ENCODE measurements at regions of chr1 and their contacts with region 1.

Region 1: GRCh38 chr1:101309334-101310311 is 72.8 kb downstream of the S1PR1 start:
- DNase-seq: no peak
- H3K4me3 ChIP-seq: peak overlapping the region in 1 of 3 experiments; percentile 7
- H3K27ac ChIP-seq: no peak overlapping the region
- H3K4me1 ChIP-seq: peaks cover 6% of the 10 kb centered on the region
- H3K27me3 ChIP-seq: peaks cover 4% of the 10 kb centered on the region
- CTCF ChIP-seq: peak; percentile 90 to 92

Region 2: GRCh38 chr1:101325144-101325543 is 15.5 kb after region 1 on chr1:
- CTCF ChIA-PET with region 1: no interaction called
- dilution Hi-C with region 1: no loop called
- in situ Hi-C with region 1: no loop called
- intact Hi-C with region 1: no loop called
- DNase-seq: no peak
- H3K4me3 ChIP-seq: no peak overlapping the region
- H3K27ac ChIP-seq: no peak overlapping the region
- H3K4me1 ChIP-seq: no peaks in the 10 kb centered on the region
- H3K27me3 ChIP-seq: peaks cover 11% of the 10 kb centered on the region
- CTCF ChIP-seq: no peak

Region 3: GRCh38 chr1:101357444-101357986 is 47.9 kb after region 1 on chr1:
- CTCF ChIA-PET with region 1: interaction called, 15 read pairs
- dilution Hi-C with region 1: no loop called
- in situ Hi-C with region 1: no loop called
- intact Hi-C with region 1: loop called (anchors 1 kb)
- DNase-seq: peak; percentile 62
- H3K4me3 ChIP-seq: no peak overlapping the region
- H3K27ac ChIP-seq: no peak overlapping the region
- H3K4me1 ChIP-seq: no peaks in the 10 kb centered on the region
- H3K27me3 ChIP-seq: peaks cover 2% of the 10 kb centered on the region
- CTCF ChIP-seq: peak; percentile 82 to 91

Region 4: DNA sequence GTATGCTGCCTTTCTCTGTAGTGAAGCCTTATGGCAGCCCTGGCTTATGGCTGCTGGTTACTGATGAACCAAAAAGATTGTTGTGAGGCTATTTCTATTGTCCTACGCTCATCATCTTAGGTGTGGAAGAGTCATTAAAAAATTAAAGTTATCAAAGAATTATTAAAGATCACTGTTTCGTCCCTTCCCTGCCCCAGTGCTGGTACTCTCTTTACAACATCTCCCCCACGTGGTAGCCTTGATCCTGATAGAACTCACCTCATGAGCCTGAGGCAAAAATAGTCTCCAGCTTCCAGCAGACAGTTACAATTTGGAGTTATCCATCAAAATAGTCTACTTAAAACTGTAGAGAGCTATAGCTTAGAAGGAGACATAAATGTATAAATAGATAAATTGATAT is 128.7 kb after region 1 on chr1:
- CTCF ChIA-PET with region 1: interaction called, 3 read pairs
- dilution Hi-C with region 1: no loop called
- in situ Hi-C with region 1: loop called in 1 of 2 experiments (anchors 25 kb)
- intact Hi-C with region 1: loop called (anchors 1 kb)
- DNase-seq: peak; percentile 20
- H3K4me3 ChIP-seq: no peak overlapping the region
- H3K27ac ChIP-seq: no peak overlapping the region
- H3K4me1 ChIP-seq: no peaks in the 10 kb centered on the region
- H3K27me3 ChIP-seq: peaks cover 12% of the 10 kb centered on the region
- CTCF ChIP-seq: peak in 1 of 2 donors; percentile 57